MCF 10A (cell line): ENCODE measurements at regions of chr20 and their contacts with region 1.

Region 1: GRCh38 chr20:10090588-10091166 is 55.9 kb downstream of the ANKEF1 start:
- DNase-seq: peak; percentile 69
- H3K4me3 Mint-ChIP-seq: no peak overlapping the region
- H3K27ac Mint-ChIP-seq: no peak overlapping the region
- H3K4me1 Mint-ChIP-seq: peaks cover 11% of the 10 kb centered on the region
- H3K27me3 Mint-ChIP-seq: no peaks in the 10 kb centered on the region
- CTCF ChIP-seq: peak; percentile 57

Region 2: GRCh38 chr20:9616833-9617489 is 473.7 kb before region 1 on chr20:
- CTCF ChIA-PET with region 1: interaction called, 44 read pairs
- POLR2A ChIA-PET with region 1: no interaction called
- intact Hi-C with region 1: no loop called
- DNase-seq: peak; percentile 72
- H3K4me3 Mint-ChIP-seq: no peak overlapping the region
- H3K27ac Mint-ChIP-seq: no peak overlapping the region
- H3K4me1 Mint-ChIP-seq: no peaks in the 10 kb centered on the region
- H3K27me3 Mint-ChIP-seq: peaks cover 28% of the 10 kb centered on the region
- CTCF ChIP-seq: peak; percentile 93

Region 3: DNA sequence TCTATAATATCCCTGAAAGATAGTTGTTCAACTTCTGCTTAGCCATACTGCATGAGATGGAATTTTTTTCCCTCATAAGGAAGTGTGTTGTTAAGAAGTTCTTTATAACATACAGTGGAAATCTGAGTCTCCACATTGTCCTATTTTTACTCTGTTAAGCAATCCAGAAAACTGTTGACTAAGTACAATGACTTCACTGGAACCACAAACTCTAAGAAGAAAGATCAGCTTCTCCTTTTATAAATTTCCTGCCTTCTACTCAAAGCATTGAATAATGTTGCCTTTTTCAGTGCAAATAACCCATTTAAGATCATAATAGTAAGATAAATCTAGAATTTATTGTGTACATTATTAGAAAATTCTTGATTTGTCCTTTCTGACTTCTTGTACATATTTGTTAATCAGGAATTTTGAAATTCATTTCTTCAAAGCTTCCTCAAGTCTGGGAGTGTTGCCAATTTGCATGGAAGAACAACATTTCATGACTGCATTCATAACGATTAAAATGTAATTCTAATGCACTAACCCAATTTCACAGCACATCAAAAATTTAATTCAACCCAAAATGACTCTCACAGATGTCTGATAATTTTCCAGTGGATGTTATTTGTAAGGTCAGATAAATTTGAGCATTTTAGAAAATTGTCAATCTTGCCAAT is 101.5 kb before region 1 on chr20:
- CTCF ChIA-PET with region 1: interaction called, 826 read pairs
- POLR2A ChIA-PET with region 1: interaction called, 35 read pairs
- intact Hi-C with region 1: no loop called
- DNase-seq: peak; percentile 82
- H3K4me3 Mint-ChIP-seq: peak overlapping the region; percentile 26
- H3K27ac Mint-ChIP-seq: peak overlapping the region; percentile 82
- H3K4me1 Mint-ChIP-seq: peaks cover 26% of the 10 kb centered on the region
- H3K27me3 Mint-ChIP-seq: no peaks in the 10 kb centered on the region
- CTCF ChIP-seq: no peak

Region 4: DNA sequence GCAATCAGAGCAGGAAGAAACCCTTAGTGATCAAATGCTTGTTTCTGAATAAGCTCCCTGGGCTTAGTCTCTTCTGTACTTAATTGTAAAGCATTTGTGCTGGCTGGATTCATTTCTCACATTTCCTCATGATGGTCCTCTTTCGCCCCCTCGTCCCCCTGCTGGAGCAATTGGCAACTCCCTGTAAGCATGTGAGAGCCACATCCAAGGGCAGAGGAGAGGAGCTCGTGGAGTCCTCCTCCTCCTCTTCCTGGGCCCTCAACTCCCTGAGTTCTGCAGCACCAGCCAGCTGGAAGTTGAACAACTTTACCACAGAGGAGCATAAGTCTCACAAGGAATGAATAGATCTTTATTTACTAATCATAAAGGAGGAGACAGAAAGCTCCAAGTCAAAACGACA is 43.2 kb before region 1 on chr20:
- CTCF ChIA-PET with region 1: interaction called, 10 read pairs
- POLR2A ChIA-PET with region 1: no interaction called
- intact Hi-C with region 1: no loop called
- DNase-seq: peak; percentile 18
- H3K4me3 Mint-ChIP-seq: no peak overlapping the region
- H3K27ac Mint-ChIP-seq: no peak overlapping the region
- H3K4me1 Mint-ChIP-seq: no peaks in the 10 kb centered on the region
- H3K27me3 Mint-ChIP-seq: no peaks in the 10 kb centered on the region
- CTCF ChIP-seq: no peak

Region 5: DNA sequence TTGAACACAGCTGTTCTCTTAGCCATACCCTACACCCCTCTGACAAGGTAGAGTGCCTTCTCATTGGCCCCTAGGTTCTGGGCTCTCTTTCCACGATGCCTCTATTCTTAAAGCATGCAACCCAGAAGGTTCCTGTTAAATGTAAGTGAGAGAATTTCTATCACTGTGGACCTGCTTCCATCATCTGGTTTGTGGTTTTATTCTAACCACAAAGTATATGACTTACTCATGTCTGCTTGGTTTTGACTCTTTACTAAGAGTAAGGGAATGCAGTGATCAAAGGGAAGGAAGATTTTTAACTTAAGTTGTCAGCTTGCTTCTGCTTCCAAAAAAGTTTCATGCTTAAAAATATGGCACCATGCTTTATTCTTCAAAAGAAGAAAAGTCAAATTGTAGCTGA is 24.3 kb after region 1 on chr20:
- CTCF ChIA-PET with region 1: interaction called, 63 read pairs
- POLR2A ChIA-PET with region 1: interaction called, 3 read pairs
- intact Hi-C with region 1: no loop called
- DNase-seq: peak; percentile 40
- H3K4me3 Mint-ChIP-seq: no peak overlapping the region
- H3K27ac Mint-ChIP-seq: no peak overlapping the region
- H3K4me1 Mint-ChIP-seq: peaks cover 8% of the 10 kb centered on the region
- H3K27me3 Mint-ChIP-seq: no peaks in the 10 kb centered on the region
- CTCF ChIP-seq: no peak

Region 6: GRCh38 chr20:10216146-10216791 is 125.6 kb after region 1 on chr20:
- CTCF ChIA-PET with region 1: no interaction called
- POLR2A ChIA-PET with region 1: no interaction called
- intact Hi-C with region 1: no loop called
- DNase-seq: no peak
- H3K4me3 Mint-ChIP-seq: no peak overlapping the region
- H3K27ac Mint-ChIP-seq: no peak overlapping the region
- H3K4me1 Mint-ChIP-seq: peaks cover 5% of the 10 kb centered on the region
- H3K27me3 Mint-ChIP-seq: peaks cover 36% of the 10 kb centered on the region
- CTCF ChIP-seq: no peak

Region 7: DNA sequence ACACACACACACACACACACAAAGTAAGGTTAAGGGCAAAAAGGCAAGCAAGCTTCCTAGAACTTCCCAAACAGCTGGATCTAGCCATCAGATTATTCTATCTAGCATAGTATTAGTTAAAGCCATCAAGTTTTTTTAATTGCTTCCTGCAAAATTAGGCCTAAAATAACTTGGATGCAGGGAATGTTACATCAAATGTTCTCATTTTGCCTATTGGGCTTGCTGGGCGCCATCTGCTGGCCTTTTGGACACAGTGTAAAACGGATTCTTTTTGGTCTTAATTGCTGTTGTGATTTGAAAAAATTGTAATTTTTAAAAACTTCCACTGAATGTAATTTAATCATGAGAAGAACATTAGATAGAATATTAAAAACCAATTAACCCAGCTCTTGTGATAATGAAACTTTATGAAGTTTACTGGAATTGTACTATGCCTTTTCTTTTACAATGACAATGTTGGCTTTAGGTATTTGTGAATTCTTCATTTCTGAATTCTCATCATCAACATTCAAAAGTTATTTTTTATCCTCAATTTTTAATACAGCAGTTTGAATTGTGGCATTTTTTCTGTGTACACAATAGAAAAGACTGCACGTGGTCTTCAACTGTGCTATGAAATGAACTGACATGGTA is 336.5 kb after region 1 on chr20:
- CTCF ChIA-PET with region 1: interaction called, 163 read pairs
- POLR2A ChIA-PET with region 1: interaction called, 5 read pairs
- intact Hi-C with region 1: loop called (anchors 2 kb)
- DNase-seq: peak; percentile 72
- H3K4me3 Mint-ChIP-seq: no peak overlapping the region
- H3K27ac Mint-ChIP-seq: peak overlapping the region; percentile 74
- H3K4me1 Mint-ChIP-seq: peaks cover 34% of the 10 kb centered on the region
- H3K27me3 Mint-ChIP-seq: no peaks in the 10 kb centered on the region
- CTCF ChIP-seq: peak; percentile 72